Panc1 (cell line): ENCODE measurements at regions of chr3 and their contacts with region 1.

Region 1: DNA sequence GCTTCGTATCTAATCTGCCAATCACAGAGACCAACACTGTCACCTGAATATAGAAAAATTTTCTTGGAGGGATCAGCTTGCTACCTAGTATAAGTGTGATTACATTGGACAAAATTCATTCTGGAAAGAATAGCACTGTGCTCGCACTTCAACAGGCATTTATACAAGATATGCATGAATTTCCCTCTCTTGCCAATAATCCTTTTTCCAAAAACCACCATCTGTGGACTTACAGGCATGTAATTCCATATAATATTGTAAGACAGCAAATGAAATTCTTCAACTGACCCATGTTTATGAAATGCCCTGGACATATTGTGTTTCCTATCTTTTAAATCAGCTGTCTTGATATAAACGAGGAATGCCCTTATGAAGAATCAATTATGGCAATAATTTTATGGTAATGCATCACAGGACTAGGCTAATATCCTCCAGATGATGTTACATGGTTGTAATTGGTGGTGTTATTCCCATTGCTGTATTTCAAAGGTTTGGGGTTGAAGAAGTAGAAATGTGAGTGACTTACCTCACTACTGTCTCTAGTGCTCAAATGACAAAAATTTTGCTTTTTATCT is 861.4 kb upstream of the NECTIN3 start:
- DNase-seq: no peak
- ATAC-seq: no peak
- H3K4me3 ChIP-seq: no peak overlapping the region
- H3K27ac ChIP-seq: no peak overlapping the region
- H3K4me1 ChIP-seq: no peaks in the 10 kb centered on the region
- H3K27me3 ChIP-seq: no peaks in the 10 kb centered on the region
- CTCF ChIP-seq: no peak

Region 2: DNA sequence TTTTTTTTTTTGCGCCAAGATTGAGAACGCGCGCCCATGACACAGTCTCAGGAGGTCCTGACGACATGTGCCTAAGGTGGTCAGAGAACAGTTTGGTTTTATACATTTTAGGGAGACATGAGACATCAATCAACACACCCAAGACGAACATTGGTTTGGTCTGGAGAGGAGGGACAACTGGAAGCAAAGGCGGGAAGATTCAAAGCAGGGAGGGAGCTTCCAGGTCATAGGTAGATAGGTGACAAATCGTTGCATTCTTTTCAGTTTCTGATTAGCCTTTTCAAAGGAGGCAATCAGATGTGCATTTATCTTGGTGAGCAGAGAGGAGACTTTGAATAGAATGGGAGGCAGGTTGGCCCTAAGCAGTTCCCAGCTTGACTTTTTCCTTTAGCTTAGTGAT is 44.4 kb before region 1 on chr3:
- CTCF ChIA-PET with region 1: no interaction called
- POLR2A ChIA-PET with region 1: interaction called, 16 read pairs
- in situ Hi-C with region 1: no loop called
- intact Hi-C with region 1: no loop called
- DNase-seq: no peak
- ATAC-seq: no peak
- H3K4me3 ChIP-seq: peak overlapping the region in 1 of 2 experiments; percentile 19; a peak in 2 of 4 replicates
- H3K27ac ChIP-seq: no peak overlapping the region
- H3K4me1 ChIP-seq: no peaks in the 10 kb centered on the region
- H3K27me3 ChIP-seq: no peaks in the 10 kb centered on the region
- CTCF ChIP-seq: no peak